Naive thymus-derived CD4-positive, alpha-beta T cell (primary cell): ENCODE measurements at regions of chr12 and their contacts with region 1.

Region 1: DNA sequence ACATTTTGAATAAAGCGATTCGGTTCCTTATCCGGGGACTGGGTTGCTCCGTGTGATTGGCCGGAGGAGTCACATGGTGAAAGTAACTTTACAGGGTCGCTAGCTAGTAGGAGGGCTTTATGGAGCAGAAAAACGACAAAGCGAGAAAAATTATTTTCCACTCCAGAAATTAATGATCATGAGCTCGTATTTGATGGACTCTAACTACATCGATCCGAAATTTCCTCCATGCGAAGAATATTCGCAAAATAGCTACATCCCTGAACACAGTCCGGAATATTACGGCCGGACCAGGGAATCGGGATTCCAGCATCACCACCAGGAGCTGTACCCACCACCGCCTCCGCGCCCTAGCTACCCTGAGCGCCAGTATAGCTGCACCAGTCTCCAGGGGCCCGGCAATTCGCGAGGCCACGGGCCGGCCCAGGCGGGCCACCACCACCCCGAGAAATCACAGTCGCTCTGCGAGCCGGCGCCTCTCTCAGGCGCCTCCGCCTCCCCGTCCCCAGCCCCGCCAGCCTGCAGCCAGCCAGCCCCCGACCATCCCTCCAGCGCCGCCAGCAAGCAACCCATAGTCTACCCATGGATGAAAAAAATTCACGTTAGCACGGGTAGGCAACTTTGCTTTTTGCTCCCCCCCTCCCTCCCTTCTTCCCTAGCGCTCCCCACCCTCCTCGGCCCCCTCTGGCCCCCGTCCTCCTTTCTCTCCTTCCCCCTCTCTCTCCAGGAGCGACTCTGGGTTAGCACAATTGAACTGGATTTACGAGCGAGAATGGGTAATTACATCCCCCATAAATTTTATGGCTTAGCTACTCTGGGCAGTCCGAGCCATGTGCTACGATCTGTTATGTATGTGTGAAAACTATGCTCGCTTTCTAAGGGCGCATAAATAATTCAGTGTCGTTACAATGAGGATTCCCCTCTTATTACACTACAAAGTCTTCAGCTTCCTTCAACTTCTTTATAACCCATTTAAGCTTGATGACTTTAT is at the start of gene HOXC4:
- DNase-seq: no peak
- ATAC-seq: peak; percentile 64
- H3K4me3 ChIP-seq: peak within 1 kb of the TSS; percentile 63
- H3K4me3 Mint-ChIP-seq: peak within 1 kb of the TSS; percentile 43 to 90 (median 77)
- H3K27ac ChIP-seq: no peak within 1 kb of the TSS
- H3K27ac Mint-ChIP-seq: peak within 1 kb of the TSS in 4 of 9 donors; percentile 18 to 67 (median 45)
- H3K4me1 ChIP-seq: peaks cover 11 to 23% of the 10 kb centered on the region in 2 donors
- H3K4me1 Mint-ChIP-seq: peaks cover 15 to 50% (median 37%) of the 10 kb centered on the region in 7 donors
- H3K27me3 ChIP-seq: peaks cover 5 to 47% of the 10 kb centered on the region in 2 donors
- H3K27me3 Mint-ChIP-seq: peaks cover 85 to 94% (median 86%) of the 10 kb centered on the region in 5 donors
- total RNA-seq, gene HOXC4: 0.24 to 0.98 TPM in 2 of 5 experiments, not detected in the others

Region 2: GRCh38 chr12:53938326-53939140 is 115.5 kb before region 1 on chr12 and contains the start of gene HOXC13:
- CTCF ChIA-PET with region 1: no interaction called
- POLR2A ChIA-PET with region 1: no interaction called
- intact Hi-C with region 1: loop called in 1 of 2 experiments (anchors 5 kb)
- DNase-seq: peak in 1 of 9 donors; percentile 21
- ATAC-seq: no peak
- H3K4me3 ChIP-seq: no peak within 1 kb of the TSS
- H3K4me3 Mint-ChIP-seq: peak within 1 kb of the TSS in 8 of 10 donors; percentile 22 to 63 (median 42)
- H3K27ac ChIP-seq: no peak within 1 kb of the TSS
- H3K27ac Mint-ChIP-seq: peak within 1 kb of the TSS in 2 of 9 donors; percentile 13 to 46
- H3K4me1 ChIP-seq: peaks cover 0 to 3% of the 10 kb centered on the region in 2 donors
- H3K4me1 Mint-ChIP-seq: peaks cover 0 to 35% (median 23%) of the 10 kb centered on the region in 7 donors
- H3K27me3 ChIP-seq: peaks cover 18 to 42% of the 10 kb centered on the region in 2 donors
- H3K27me3 Mint-ChIP-seq: peaks cover 84 to 95% (median 90%) of the 10 kb centered on the region in 5 donors
- total RNA-seq, gene HOXC13: not detected

Region 3: GRCh38 chr12:53952871-53953734 is 100.9 kb before region 1 on chr12:
- CTCF ChIA-PET with region 1: no interaction called
- POLR2A ChIA-PET with region 1: interaction called, 5 read pairs
- intact Hi-C with region 1: loop called in 1 of 2 experiments (anchors 5 kb)
- DNase-seq: no peak
- ATAC-seq: no peak
- H3K4me3 ChIP-seq: no peak overlapping the region
- H3K4me3 Mint-ChIP-seq: peak overlapping the region in 7 of 10 donors; percentile 3 to 59 (median 38)
- H3K27ac ChIP-seq: no peak overlapping the region
- H3K27ac Mint-ChIP-seq: peak overlapping the region in 7 of 9 donors; percentile 23 to 88 (median 75)
- H3K4me1 ChIP-seq: peaks cover 4 to 15% of the 10 kb centered on the region in 2 donors
- H3K4me1 Mint-ChIP-seq: peaks cover 9 to 57% (median 26%) of the 10 kb centered on the region in 7 donors
- H3K27me3 ChIP-seq: peaks cover 34 to 69% of the 10 kb centered on the region in 2 donors
- H3K27me3 Mint-ChIP-seq: peaks cover 76 to 96% (median 90%) of the 10 kb centered on the region in 5 donors

Region 4: GRCh38 chr12:54159140-54159539 is 105.1 kb after region 1 on chr12:
- CTCF ChIA-PET with region 1: no interaction called
- POLR2A ChIA-PET with region 1: no interaction called
- intact Hi-C with region 1: no loop called
- DNase-seq: no peak
- ATAC-seq: peak; percentile 67
- H3K4me3 ChIP-seq: no peak overlapping the region
- H3K4me3 Mint-ChIP-seq: no peak overlapping the region
- H3K27ac ChIP-seq: no peak overlapping the region
- H3K27ac Mint-ChIP-seq: no peak overlapping the region
- H3K4me1 ChIP-seq: no peaks in the 10 kb centered on the region
- H3K4me1 Mint-ChIP-seq: peaks cover 0 to 5% (median 0%) of the 10 kb centered on the region in 7 donors
- H3K27me3 ChIP-seq: no peaks in the 10 kb centered on the region
- H3K27me3 Mint-ChIP-seq: peaks cover 0 to 54% (median 29%) of the 10 kb centered on the region in 5 donors